ENCODE measurements at regions of chr9 and their contacts with region 1.

Region 1: DNA sequence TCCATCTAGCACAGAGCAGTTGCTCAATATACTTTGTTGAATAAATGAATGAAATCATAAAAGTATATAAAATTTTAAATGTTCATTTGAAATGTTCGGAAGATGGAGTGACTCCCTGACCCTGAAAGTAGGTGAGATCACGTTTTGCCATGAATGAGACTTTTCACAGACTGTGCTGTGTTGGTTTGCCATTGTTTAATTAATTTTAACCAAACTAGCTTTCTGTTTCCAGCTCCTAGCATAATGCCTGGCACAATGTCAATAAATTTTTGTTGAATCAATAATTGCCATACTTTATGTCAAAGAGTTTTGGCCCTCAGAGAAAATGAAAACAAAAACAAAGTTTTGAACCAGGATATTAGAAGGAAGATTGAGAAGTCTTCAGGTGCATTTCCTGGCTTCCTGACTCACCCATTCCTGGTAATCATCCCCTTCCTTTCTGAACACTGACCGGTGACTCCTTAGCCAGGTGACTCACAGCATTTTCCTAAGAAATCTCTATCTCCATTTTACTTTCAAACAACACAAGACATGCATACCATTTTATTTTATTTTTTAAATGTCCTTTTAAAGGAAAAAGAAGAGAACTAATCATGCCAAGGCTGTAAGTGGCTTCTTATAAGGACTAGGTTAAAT is 15.1 kb downstream of the SLC28A3 start:
- H3K4me3 ChIP-seq: no peak overlapping the region
- H3K27ac ChIP-seq: no peak overlapping the region
- H3K4me1 ChIP-seq: no peaks in the 10 kb centered on the region
- CTCF ChIP-seq: no peak

Region 2: GRCh38 chr9:84315278-84315877 is 10.1 kb before region 1 on chr9:
- CTCF ChIA-PET with region 1: interaction called, 13 read pairs
- POLR2A ChIA-PET with region 1: no interaction called
- H3K4me3 ChIP-seq: no peak overlapping the region
- H3K27ac ChIP-seq: no peak overlapping the region
- H3K4me1 ChIP-seq: no peaks in the 10 kb centered on the region
- CTCF ChIP-seq: no peak